BJ (cell line): ENCODE measurements at regions of chr11 and their contacts with region 1.

Region 1: GRCh38 chr11:112150517-112150916 is 13.4 kb downstream of the IL18 start:
- DNase-seq: no peak
- H3K4me3 ChIP-seq: no peak overlapping the region
- H3K27me3 ChIP-seq: no peaks in the 10 kb centered on the region
- CTCF ChIP-seq: no peak

Region 2: GRCh38 chr11:112086422-112087191 is 63.9 kb before region 1 on chr11 and contains the starts of genes SDHD and TIMM8B:
- CTCF ChIA-PET with region 1: no interaction called
- POLR2A ChIA-PET with region 1: no interaction called
- DNase-seq: peak; percentile 78
- H3K4me3 ChIP-seq: peak within 1 kb of the TSS; percentile 90
- H3K27me3 ChIP-seq: no peaks in the 10 kb centered on the region
- CTCF ChIP-seq: peak; percentile 59
- polyA plus RNA-seq, gene SDHD: 131 and 207 TPM in 2 replicates
- polyA plus RNA-seq, gene TIMM8B: 112 and 118 TPM in 2 replicates

Region 3: GRCh38 chr11:112163875-112164685 is 13.6 kb after region 1 on chr11 and contains the start of gene IL18:
- CTCF ChIA-PET with region 1: no interaction called
- POLR2A ChIA-PET with region 1: no interaction called
- DNase-seq: no peak
- H3K4me3 ChIP-seq: no peak within 1 kb of the TSS
- H3K27me3 ChIP-seq: no peaks in the 10 kb centered on the region
- CTCF ChIP-seq: no peak
- polyA plus RNA-seq, gene IL18: 1.5 and 2.7 TPM in 2 replicates

Region 4: GRCh38 chr11:112211536-112211935 is 61.0 kb after region 1 on chr11:
- CTCF ChIA-PET with region 1: no interaction called
- POLR2A ChIA-PET with region 1: interaction called, 13 read pairs
- DNase-seq: no peak
- H3K4me3 ChIP-seq: no peak overlapping the region
- H3K27me3 ChIP-seq: no peaks in the 10 kb centered on the region
- CTCF ChIP-seq: no peak

Region 5: GRCh38 chr11:112751329-112751728 is 600.8 kb after region 1 on chr11:
- CTCF ChIA-PET with region 1: no interaction called
- POLR2A ChIA-PET with region 1: no interaction called
- DNase-seq: no peak
- H3K4me3 ChIP-seq: no peak overlapping the region
- H3K27me3 ChIP-seq: no peaks in the 10 kb centered on the region
- CTCF ChIP-seq: no peak